CD8-positive, alpha-beta T cell (primary cell): ENCODE measurements at regions of chr4 and their contacts with region 1.

Region 1: GRCh38 chr4:76148142-76148865 is at the start of gene NUP54:
- DNase-seq: peak; percentile 91 to 97 (median 95)
- ATAC-seq: peak; percentile 98
- H3K4me3 ChIP-seq: peak within 1 kb of the TSS; percentile 66 to 99
- H3K4me3 Mint-ChIP-seq: peak within 1 kb of the TSS; percentile 96
- H3K27ac ChIP-seq: peak within 1 kb of the TSS; percentile 90 to 93
- H3K27ac Mint-ChIP-seq: peak within 1 kb of the TSS; percentile 96
- H3K4me1 ChIP-seq: peaks cover 29% of the 10 kb centered on the region
- H3K4me1 Mint-ChIP-seq: peaks cover 45% of the 10 kb centered on the region
- H3K27me3 ChIP-seq: no peaks in the 10 kb centered on the region
- H3K27me3 Mint-ChIP-seq: no peaks in the 10 kb centered on the region
- CTCF ChIP-seq: no peak
- total RNA-seq, gene NUP54: 95.7 to 103 TPM

Region 2: DNA sequence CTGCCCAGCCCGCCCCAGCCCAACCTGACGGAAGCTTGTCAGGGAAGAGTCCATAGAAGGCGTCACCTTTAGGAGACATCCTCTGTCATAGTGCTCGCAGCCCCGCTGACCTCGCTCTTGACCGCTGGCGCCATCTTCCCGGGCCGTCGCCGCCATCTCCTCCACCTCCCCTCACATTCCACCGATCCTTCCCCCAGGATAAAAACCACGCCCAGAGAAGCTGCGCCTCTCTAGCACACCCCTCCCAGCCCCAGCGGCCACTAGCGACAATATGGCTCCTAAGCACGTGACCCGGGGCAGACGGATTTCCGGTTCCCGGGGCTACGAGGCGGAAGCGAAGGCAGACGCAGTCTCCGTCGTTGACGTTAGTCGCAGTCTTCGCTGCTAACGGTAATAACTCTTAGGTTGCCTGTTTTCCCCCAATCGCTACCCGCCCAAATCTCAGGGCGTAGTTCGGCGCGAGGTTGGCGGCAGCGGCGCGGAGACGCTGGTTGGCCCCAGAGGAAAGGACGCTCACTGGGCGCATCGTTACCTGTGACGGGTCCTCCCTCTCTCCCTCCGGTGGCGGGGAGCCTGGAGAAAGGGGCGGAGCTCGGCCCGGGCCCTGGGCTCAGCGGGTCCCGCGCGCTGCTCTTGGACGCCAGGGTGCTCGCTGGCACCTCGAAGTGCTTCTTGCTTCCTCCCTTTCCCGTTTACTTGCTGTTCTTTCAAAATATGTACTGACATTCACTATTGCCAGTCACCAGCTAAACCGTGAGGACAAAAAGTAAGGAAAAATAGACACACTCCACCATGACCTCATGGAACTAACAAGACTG is 634.0 kb before region 1 on chr4 and contains the starts of genes RCHY1 and THAP6:
- CTCF ChIA-PET with region 1: no interaction called
- POLR2A ChIA-PET with region 1: no interaction called
- intact Hi-C with region 1: loop called (anchors 1 to 5 kb)
- DNase-seq: peak; percentile 84 to 97 (median 92)
- ATAC-seq: peak; percentile 87
- H3K4me3 ChIP-seq: peak within 1 kb of the TSS; percentile 92 to 94
- H3K4me3 Mint-ChIP-seq: no peak within 1 kb of the TSS
- H3K27ac ChIP-seq: peak within 1 kb of the TSS; percentile 96 to 98
- H3K27ac Mint-ChIP-seq: peak within 1 kb of the TSS; percentile 99
- H3K4me1 ChIP-seq: peaks cover 55% of the 10 kb centered on the region
- H3K4me1 Mint-ChIP-seq: peaks cover 63% of the 10 kb centered on the region
- H3K27me3 ChIP-seq: no peaks in the 10 kb centered on the region
- H3K27me3 Mint-ChIP-seq: no peaks in the 10 kb centered on the region
- CTCF ChIP-seq: no peak
- total RNA-seq, gene RCHY1: 45.4 to 52.8 TPM
- total RNA-seq, gene THAP6: 15.3 to 16.3 TPM

Region 3: GRCh38 chr4:75724066-75724866 is 424.0 kb before region 1 on chr4 and contains the start of gene USO1:
- CTCF ChIA-PET with region 1: no interaction called
- POLR2A ChIA-PET with region 1: no interaction called
- intact Hi-C with region 1: loop called in 1 of 2 experiments (anchors 1 kb)
- DNase-seq: peak; percentile 98 to 100 (median 99)
- ATAC-seq: peak; percentile 92
- H3K4me3 ChIP-seq: peak within 1 kb of the TSS; percentile 58 to 99
- H3K4me3 Mint-ChIP-seq: peak within 1 kb of the TSS; percentile 99
- H3K27ac ChIP-seq: peak within 1 kb of the TSS; percentile 70 to 93
- H3K27ac Mint-ChIP-seq: peak within 1 kb of the TSS; percentile 99
- H3K4me1 ChIP-seq: peaks cover 32% of the 10 kb centered on the region
- H3K4me1 Mint-ChIP-seq: peaks cover 54% of the 10 kb centered on the region
- H3K27me3 ChIP-seq: no peaks in the 10 kb centered on the region
- H3K27me3 Mint-ChIP-seq: no peaks in the 10 kb centered on the region
- CTCF ChIP-seq: peak; percentile 79
- total RNA-seq, gene USO1: 9.8 to 10.2 TPM

Region 4: DNA sequence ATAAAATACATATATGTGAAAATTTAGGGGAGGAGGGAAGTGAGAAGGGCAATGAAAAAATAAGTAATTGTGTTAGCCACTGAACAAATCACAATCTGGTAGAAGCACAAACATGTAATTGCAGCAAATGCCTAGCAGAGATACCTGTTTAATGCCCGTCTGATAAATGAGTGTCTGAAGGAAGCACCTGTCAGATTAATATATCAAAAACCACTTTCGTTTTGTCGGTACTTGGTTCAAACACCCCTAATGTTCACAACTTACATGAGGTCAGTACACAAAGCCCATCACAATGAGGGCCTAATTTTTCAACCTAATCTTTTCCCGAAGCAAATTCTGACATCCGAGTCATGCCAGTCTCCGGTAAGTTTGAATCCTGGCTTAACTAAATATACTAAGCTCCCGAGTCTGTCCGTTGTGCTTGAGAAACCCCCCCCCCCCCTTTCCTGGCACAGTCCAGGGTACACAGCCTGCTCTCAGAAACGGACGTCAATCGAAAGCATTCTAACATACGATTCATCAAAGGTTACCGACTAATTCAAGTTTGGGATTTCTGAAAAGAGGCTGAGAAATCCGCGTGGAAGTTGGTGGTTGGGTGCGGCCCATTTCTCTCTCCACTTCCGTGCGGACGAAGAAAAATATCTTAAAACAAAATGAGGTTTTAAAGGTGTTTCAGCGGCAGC is 158.3 kb before region 1 on chr4:
- CTCF ChIA-PET with region 1: no interaction called
- POLR2A ChIA-PET with region 1: interaction called, 3 read pairs
- intact Hi-C with region 1: loop called (anchors 1 kb)
- DNase-seq: peak in 2 of 9 experiments; percentile 8 to 32
- ATAC-seq: no peak
- H3K4me3 ChIP-seq: peak overlapping the region; percentile 78 to 91
- H3K4me3 Mint-ChIP-seq: peak overlapping the region; percentile 96
- H3K27ac ChIP-seq: peak overlapping the region; percentile 17 to 73
- H3K27ac Mint-ChIP-seq: peak overlapping the region; percentile 95
- H3K4me1 ChIP-seq: peaks cover 37% of the 10 kb centered on the region
- H3K4me1 Mint-ChIP-seq: peaks cover 29% of the 10 kb centered on the region
- H3K27me3 ChIP-seq: no peaks in the 10 kb centered on the region
- H3K27me3 Mint-ChIP-seq: peaks cover 1% of the 10 kb centered on the region
- CTCF ChIP-seq: no peak

Region 5: GRCh38 chr4:76949276-76950051 is 801.2 kb after region 1 on chr4 and contains the start of gene SEPTIN11:
- CTCF ChIA-PET with region 1: no interaction called
- POLR2A ChIA-PET with region 1: no interaction called
- intact Hi-C with region 1: loop called in 1 of 2 experiments (anchors 5 kb)
- DNase-seq: peak; percentile 74 to 94 (median 84)
- ATAC-seq: peak; percentile 74
- H3K4me3 ChIP-seq: peak within 1 kb of the TSS; percentile 88 to 89
- H3K4me3 Mint-ChIP-seq: peak within 1 kb of the TSS; percentile 92
- H3K27ac ChIP-seq: peak within 1 kb of the TSS; percentile 56 to 66
- H3K27ac Mint-ChIP-seq: peak within 1 kb of the TSS; percentile 77
- H3K4me1 ChIP-seq: peaks cover 15% of the 10 kb centered on the region
- H3K4me1 Mint-ChIP-seq: peaks cover 24% of the 10 kb centered on the region
- H3K27me3 ChIP-seq: no peaks in the 10 kb centered on the region
- H3K27me3 Mint-ChIP-seq: no peaks in the 10 kb centered on the region
- CTCF ChIP-seq: no peak
- total RNA-seq, gene SEPTIN11: 12.3 to 13.1 TPM

Region 6: GRCh38 chr4:77862478-77863216 is 1714.3 kb after region 1 on chr4 and contains the start of gene MRPL1:
- CTCF ChIA-PET with region 1: no interaction called
- POLR2A ChIA-PET with region 1: no interaction called
- intact Hi-C with region 1: loop called in 1 of 2 experiments (anchors 5 kb)
- DNase-seq: peak; percentile 77 to 96 (median 88)
- ATAC-seq: peak; percentile 76
- H3K4me3 ChIP-seq: peak within 1 kb of the TSS; percentile 63 to 76
- H3K4me3 Mint-ChIP-seq: peak within 1 kb of the TSS; percentile 94
- H3K27ac ChIP-seq: peak within 1 kb of the TSS; percentile 95 to 98
- H3K27ac Mint-ChIP-seq: peak within 1 kb of the TSS; percentile 99
- H3K4me1 ChIP-seq: peaks cover 26% of the 10 kb centered on the region
- H3K4me1 Mint-ChIP-seq: peaks cover 62% of the 10 kb centered on the region
- H3K27me3 ChIP-seq: no peaks in the 10 kb centered on the region
- H3K27me3 Mint-ChIP-seq: no peaks in the 10 kb centered on the region
- CTCF ChIP-seq: no peak
- total RNA-seq, gene MRPL1: 14.8 to 20.5 TPM